ENCODE measurements at regions of chr12 and their contacts with region 1.

Region 1: DNA sequence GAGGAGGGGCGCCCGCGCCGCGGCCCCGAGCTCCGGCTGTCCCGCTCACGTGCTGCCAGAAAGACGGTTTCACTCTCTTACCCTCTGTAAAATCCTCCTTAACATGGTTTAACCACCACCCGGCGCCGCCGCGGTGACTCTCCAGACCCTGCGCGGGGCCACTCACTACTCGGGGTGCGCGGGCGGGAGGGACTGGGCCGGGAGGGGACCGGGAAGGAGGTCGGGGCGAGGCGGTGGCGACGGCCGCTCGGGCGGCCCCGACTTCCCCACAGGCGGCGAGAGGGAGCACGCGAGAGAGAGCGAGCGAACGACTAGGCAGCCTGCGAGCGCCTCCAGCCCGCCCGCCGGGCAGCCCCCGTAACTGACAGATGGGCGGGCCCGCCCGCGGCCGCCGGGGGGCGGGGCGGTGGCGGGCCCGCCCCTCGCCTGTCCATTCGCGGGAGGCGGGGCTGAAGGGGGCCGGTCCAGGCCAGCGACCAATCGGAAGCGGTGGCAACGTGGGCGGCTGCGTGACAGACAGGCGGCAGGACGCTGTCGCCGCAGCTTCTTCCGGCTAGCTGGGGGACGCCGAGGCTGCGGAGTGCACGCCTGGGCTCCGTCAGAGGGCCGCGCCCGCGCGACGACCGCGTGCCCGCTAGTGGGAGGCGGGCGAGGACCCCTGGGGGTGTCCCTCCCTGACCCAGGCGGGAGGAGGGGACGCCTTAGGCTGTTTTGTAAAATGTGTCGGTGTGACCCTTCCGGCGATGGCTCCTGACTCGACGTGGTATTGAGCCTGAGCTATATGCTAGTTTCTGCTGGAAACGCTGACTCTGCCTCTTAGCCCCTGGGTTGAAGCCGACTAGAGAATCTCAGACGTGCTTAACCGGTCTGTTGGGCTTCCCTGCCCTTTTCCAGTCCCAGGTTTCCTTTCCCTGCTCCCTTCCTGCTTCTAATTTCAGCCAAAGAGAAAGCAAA is at the start of gene EEA1:
- DNase-seq: peak; percentile 92
- H3K4me3 Mint-ChIP-seq: peak within 1 kb of the TSS; percentile 89
- H3K27ac Mint-ChIP-seq: peak within 1 kb of the TSS; percentile 96
- H3K4me1 Mint-ChIP-seq: peaks cover 31% of the 10 kb centered on the region
- H3K27me3 Mint-ChIP-seq: peaks cover 13% of the 10 kb centered on the region
- total RNA-seq, gene EEA1: 17.5 and 18.8 TPM in 2 replicates

Region 2: GRCh38 chr12:92145731-92146496 is 783.3 kb before region 1 on chr12 and contains the start of gene BTG1:
- intact Hi-C with region 1: loop called (anchors 1 kb)
- DNase-seq: peak; percentile 99
- H3K4me3 Mint-ChIP-seq: peak within 1 kb of the TSS; percentile 94
- H3K27ac Mint-ChIP-seq: peak within 1 kb of the TSS; percentile 97
- H3K4me1 Mint-ChIP-seq: peaks cover 51% of the 10 kb centered on the region
- H3K27me3 Mint-ChIP-seq: peaks cover 2% of the 10 kb centered on the region
- total RNA-seq, gene BTG1: 86.4 and 87.9 TPM in 2 replicates

Region 3: DNA sequence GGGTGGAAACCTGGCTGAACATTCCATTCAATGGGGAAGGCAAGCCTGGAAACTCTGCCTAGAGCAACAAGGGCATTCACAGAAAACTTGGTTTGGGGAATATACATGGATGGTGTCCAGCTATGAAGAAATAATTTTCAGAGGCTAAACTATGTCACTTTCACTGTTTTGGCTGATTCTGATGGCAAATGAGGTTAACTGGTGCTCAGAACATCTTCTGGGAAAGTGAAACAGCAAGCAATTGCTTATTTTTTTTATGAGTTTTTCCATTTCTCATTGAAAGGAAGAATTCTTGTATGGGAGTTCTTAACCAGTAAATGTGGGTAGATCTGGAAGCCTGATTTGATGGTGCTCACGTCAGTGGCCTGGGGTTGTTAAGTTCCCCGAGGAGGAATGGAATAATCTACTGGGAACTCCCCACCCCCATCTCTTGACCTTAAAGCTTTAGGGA is 650.8 kb before region 1 on chr12:
- intact Hi-C with region 1: no loop called
- DNase-seq: no peak
- H3K4me3 Mint-ChIP-seq: no peak overlapping the region
- H3K27ac Mint-ChIP-seq: peak overlapping the region; percentile 37
- H3K4me1 Mint-ChIP-seq: peaks cover 14% of the 10 kb centered on the region
- H3K27me3 Mint-ChIP-seq: no peaks in the 10 kb centered on the region

Region 4: DNA sequence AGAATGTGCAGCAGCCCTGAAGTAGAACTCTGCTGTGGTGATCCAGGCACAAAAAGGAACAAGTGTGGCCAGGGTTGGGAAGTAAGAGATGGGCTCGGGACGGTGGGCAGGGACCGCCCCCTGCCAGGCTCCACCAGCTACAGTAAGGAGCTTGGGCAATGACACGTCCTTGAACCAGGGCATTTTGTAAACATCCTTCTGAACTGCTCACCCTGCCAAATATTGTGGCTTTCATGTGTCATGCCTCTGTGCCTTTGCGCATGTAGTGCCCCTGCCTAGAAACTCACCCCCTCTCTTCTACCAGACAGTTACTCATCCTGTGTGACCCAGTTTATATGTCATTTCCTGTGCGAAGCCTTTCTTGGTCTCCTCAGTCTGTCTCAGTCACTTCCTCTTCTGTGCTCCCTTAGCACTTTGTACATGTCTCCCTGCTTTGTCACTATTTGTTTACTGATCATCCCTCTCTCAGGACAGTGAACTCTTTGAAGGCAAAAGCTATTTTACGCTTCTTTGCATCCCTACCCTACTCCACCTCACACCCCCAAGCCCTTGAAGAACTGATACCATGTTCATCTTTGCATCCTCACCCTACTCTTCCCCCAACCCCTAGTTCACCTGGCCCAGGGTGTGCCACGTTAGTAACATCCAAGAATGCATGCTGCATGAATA is 335.4 kb before region 1 on chr12:
- intact Hi-C with region 1: loop called (anchors 1 kb)
- DNase-seq: peak; percentile 79
- H3K4me3 Mint-ChIP-seq: peak overlapping the region; percentile 72
- H3K27ac Mint-ChIP-seq: peak overlapping the region; percentile 99
- H3K4me1 Mint-ChIP-seq: peaks cover 63% of the 10 kb centered on the region
- H3K27me3 Mint-ChIP-seq: no peaks in the 10 kb centered on the region

Region 5: GRCh38 chr12:93089805-93090569 is 160.7 kb after region 1 on chr12:
- intact Hi-C with region 1: loop called (anchors 1 kb)
- DNase-seq: no peak
- H3K4me3 Mint-ChIP-seq: no peak overlapping the region
- H3K27ac Mint-ChIP-seq: peak overlapping the region; percentile 42
- H3K4me1 Mint-ChIP-seq: peaks cover 23% of the 10 kb centered on the region
- H3K27me3 Mint-ChIP-seq: no peaks in the 10 kb centered on the region

Region 6: DNA sequence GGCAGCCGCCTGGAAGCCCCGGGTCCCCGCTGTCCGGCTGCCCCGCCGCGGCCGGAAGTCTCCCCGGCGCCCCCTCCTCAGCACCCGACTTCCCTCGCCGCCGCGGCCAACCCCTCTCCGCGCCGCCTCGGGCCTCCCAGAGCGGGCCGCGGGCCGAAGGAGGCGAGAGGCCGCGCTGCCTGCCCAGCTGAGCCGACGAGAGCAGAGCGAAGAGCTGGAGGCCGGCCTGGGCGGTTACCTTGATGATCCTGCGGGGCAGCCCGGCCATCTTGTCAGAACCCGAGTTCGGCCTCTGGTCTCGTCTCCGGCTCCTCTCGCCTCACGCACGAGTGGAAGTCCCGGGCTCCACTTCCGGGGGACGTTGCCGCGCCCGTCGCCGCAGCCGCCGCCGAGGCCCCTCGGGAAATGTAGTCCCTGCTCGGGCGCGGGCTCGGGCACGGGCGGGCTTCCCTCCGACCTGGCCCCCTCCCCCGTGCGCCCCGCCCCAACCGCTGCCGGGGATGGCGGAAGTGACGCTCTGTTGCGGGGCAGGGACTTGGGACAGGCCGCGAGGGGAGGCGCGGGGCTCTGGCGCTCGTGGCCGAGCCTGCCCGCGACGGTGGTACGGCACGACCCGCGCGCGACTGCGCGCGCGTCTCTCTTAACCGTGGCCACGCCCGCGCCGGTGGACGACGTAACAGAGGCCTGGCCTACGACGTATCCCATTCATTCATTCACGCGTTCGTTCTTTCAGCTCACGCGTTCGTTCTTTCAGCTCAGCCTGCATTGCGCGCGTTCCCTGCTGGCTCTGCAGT is 512.6 kb after region 1 on chr12 and contains the start of gene UBE2N:
- intact Hi-C with region 1: loop called (anchors 1 kb)
- DNase-seq: peak; percentile 95
- H3K4me3 Mint-ChIP-seq: peak within 1 kb of the TSS; percentile 96
- H3K27ac Mint-ChIP-seq: peak within 1 kb of the TSS; percentile 99
- H3K4me1 Mint-ChIP-seq: peaks cover 51% of the 10 kb centered on the region
- H3K27me3 Mint-ChIP-seq: no peaks in the 10 kb centered on the region
- total RNA-seq, gene UBE2N: 231 and 239 TPM in 2 replicates

Region 7: GRCh38 chr12:94101738-94102660 is 1172.8 kb after region 1 on chr12:
- intact Hi-C with region 1: loop called (anchors 5 kb)
- DNase-seq: peak; percentile 81
- H3K4me3 Mint-ChIP-seq: peak overlapping the region; percentile 84
- H3K27ac Mint-ChIP-seq: peak overlapping the region; percentile 72
- H3K4me1 Mint-ChIP-seq: peaks cover 37% of the 10 kb centered on the region
- H3K27me3 Mint-ChIP-seq: peaks cover 10% of the 10 kb centered on the region